Prostate gland (tissue), 2 donors: ENCODE measurements at regions of chr12 and their contacts with region 1.

Region 1: DNA sequence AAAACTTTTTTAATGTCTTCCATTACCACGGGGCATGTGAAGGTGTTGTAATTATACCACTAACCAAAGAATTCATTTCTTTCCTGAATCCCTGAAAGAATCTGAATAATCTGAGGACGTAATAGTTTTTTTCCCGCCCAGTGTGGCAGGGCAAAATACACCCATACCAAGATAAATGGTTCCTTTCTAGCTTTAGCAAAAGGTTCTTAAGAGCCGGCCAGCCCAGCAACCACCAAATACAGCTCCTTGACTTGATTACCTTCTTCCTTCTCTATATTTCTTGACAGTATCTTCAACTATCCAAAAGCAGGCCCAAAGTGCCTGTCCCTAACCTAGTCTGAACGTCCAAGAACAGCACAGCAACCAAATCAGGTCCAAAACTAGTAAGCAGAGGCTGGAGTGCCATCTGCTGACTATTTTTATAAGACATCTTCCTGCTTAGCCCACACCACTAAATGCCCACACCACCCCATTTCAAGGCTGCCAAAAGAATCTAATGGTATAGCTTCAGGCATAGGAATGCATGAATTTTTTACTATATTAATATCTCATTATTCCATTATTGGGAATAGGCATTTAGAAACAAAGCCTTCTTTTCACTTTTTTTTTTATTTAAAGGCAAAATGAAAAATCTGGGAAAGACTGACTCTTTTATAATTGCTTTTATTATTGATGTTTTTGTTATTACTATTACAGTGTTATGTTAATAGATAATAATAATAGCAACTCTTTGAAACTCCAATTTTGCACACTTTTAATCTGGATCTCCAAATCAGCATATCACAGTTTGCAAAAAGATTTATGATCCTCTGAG is 524.4 kb downstream of the MED13L start:
- DNase-seq: peak; percentile 87
- H3K4me3 ChIP-seq: peak overlapping the region in 1 of 2 donors; percentile 31
- H3K27ac ChIP-seq: peak overlapping the region; percentile 94 to 97
- H3K4me1 ChIP-seq: peaks cover 4% of the 10 kb centered on the region
- H3K27me3 ChIP-seq: no peaks in the 10 kb centered on the region
- CTCF ChIP-seq: peak; percentile 52 to 86 (median 70)
- POLR2A ChIP-seq: no peak

Region 2: GRCh38 chr12:114403011-114403689 is 1350.0 kb before region 1 on chr12:
- intact Hi-C with region 1: loop called (anchors 5 kb)
- DNase-seq: no peak
- H3K4me3 ChIP-seq: no peak overlapping the region
- H3K27ac ChIP-seq: peak overlapping the region in 1 of 2 donors; percentile 19
- H3K4me1 ChIP-seq: no peaks in the 10 kb centered on the region
- H3K27me3 ChIP-seq: peaks cover 44% of the 10 kb centered on the region
- CTCF ChIP-seq: no peak
- POLR2A ChIP-seq: no peak

Region 3: GRCh38 chr12:114668151-114668885 is 1084.8 kb before region 1 on chr12:
- intact Hi-C with region 1: loop called (anchors 2 kb)
- DNase-seq: peak; percentile 94
- H3K4me3 ChIP-seq: peak overlapping the region; percentile 31 to 94
- H3K27ac ChIP-seq: peak overlapping the region; percentile 88 to 98
- H3K4me1 ChIP-seq: no peaks in the 10 kb centered on the region
- H3K27me3 ChIP-seq: no peaks in the 10 kb centered on the region
- CTCF ChIP-seq: peak; percentile 43 to 93 (median 68)
- POLR2A ChIP-seq: peak; percentile 40

Region 4: GRCh38 chr12:114999812-115000437 is 753.2 kb before region 1 on chr12:
- intact Hi-C with region 1: loop called (anchors 10 kb)
- DNase-seq: no peak
- H3K4me3 ChIP-seq: no peak overlapping the region
- H3K27ac ChIP-seq: no peak overlapping the region
- H3K4me1 ChIP-seq: no peaks in the 10 kb centered on the region
- H3K27me3 ChIP-seq: no peaks in the 10 kb centered on the region
- CTCF ChIP-seq: no peak
- POLR2A ChIP-seq: no peak

Region 5: GRCh38 chr12:115166698-115167315 is 586.3 kb before region 1 on chr12:
- intact Hi-C with region 1: loop called (anchors 5 kb)
- DNase-seq: no peak
- H3K4me3 ChIP-seq: no peak overlapping the region
- H3K27ac ChIP-seq: no peak overlapping the region
- H3K4me1 ChIP-seq: no peaks in the 10 kb centered on the region
- H3K27me3 ChIP-seq: no peaks in the 10 kb centered on the region
- CTCF ChIP-seq: peak in 1 of 4 experiments; percentile 6
- POLR2A ChIP-seq: no peak

Region 6: GRCh38 chr12:115916910-115917668 is 164.0 kb after region 1 on chr12:
- intact Hi-C with region 1: loop called (anchors 5 kb)
- DNase-seq: peak; percentile 74
- H3K4me3 ChIP-seq: peak overlapping the region; percentile 39 to 41
- H3K27ac ChIP-seq: peak overlapping the region; percentile 69 to 74
- H3K4me1 ChIP-seq: no peaks in the 10 kb centered on the region
- H3K27me3 ChIP-seq: no peaks in the 10 kb centered on the region
- CTCF ChIP-seq: peak; percentile 99
- POLR2A ChIP-seq: no peak

Region 7: GRCh38 chr12:116609319-116610114 is 856.4 kb after region 1 on chr12:
- intact Hi-C with region 1: no loop called
- DNase-seq: no peak
- H3K4me3 ChIP-seq: no peak overlapping the region
- H3K27ac ChIP-seq: no peak overlapping the region
- H3K4me1 ChIP-seq: peaks cover 5% of the 10 kb centered on the region
- H3K27me3 ChIP-seq: no peaks in the 10 kb centered on the region
- CTCF ChIP-seq: peak in 1 of 4 experiments; percentile 7
- POLR2A ChIP-seq: no peak